ENCODE measurements at regions of chr1 and their contacts with region 1.

Region 1: DNA sequence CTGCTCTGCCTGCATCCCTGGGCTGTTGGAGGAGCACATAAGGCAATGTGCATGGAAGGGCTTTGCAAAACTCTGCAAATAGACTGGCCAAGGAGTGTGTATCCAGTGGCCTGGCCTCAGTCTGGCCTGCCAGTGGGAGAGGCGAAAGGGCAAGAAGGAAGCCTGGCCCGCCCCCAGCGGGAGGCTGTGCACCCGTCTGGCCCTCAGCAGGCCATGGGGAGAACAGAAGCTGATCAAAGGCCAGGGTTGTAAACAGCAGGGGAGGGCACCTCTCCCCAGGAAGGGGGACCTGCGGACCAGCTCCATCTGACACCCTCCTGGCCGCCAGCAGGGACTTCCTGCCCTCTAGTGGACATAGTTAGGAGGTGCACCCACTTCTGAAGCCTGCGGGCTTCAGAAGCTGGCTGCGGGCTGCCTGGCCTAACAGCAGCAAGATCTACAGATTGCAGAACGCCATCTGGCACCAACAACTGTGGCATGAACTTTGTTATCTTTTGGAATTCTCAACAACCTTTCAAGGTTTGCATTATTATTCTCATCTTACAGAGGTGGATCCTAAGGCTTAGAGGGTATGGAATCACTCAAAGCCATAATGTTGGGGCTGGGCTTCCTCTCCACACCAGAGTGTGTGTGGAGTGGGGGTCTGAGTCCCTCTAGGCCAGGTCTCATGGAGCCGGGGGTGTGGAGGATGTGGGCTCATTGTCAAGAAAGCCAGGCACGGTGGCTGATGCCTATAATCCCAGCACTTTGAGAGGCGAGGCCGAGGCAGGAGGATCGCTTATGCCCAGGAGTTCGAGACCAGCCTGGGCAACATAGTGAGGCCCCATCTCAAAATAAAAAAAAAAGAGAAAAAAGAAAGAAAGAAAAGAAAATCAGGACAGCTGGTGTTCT is 18.9 kb upstream of the CDK18 start:
- DNase-seq: peak; percentile 92
- H3K4me3 ChIP-seq: peak overlapping the region in 1 of 2 experiments; percentile 22; a peak in 1 of 4 replicates
- H3K27ac ChIP-seq: no peak overlapping the region
- H3K4me1 ChIP-seq: peaks cover 0 to 3% of the 10 kb centered on the region in 2 experiments; a peak in 2 of 4 replicates
- H3K27me3 ChIP-seq: peaks cover 16% of the 10 kb centered on the region; the same call in 1 of the 2 replicates
- CTCF ChIP-seq: peak; percentile 93
- EP300 ChIP-seq: no peak; a peak in 1 of 4 replicates
- RAD21 ChIP-seq: peak; percentile 91

Region 2: GRCh38 chr1:205344066-205344928 is 141.3 kb before region 1 on chr1:
- CTCF ChIA-PET with region 1: interaction called, 79 read pairs
- POLR2A ChIA-PET with region 1: no interaction called
- DNase-seq: peak; percentile 77
- H3K4me3 ChIP-seq: peak overlapping the region; percentile 41 to 56
- H3K27ac ChIP-seq: no peak overlapping the region
- H3K4me1 ChIP-seq: peaks cover 0 to 7% of the 10 kb centered on the region in 2 experiments; a peak in 1 of 4 replicates
- H3K27me3 ChIP-seq: peaks cover 11% of the 10 kb centered on the region; the same call in 1 of the 2 replicates
- CTCF ChIP-seq: no peak
- EP300 ChIP-seq: no peak
- RAD21 ChIP-seq: no peak

Region 3: GRCh38 chr1:205382561-205382960 is 103.0 kb before region 1 on chr1:
- CTCF ChIA-PET with region 1: interaction called, 21 read pairs
- POLR2A ChIA-PET with region 1: no interaction called
- DNase-seq: no peak
- H3K4me3 ChIP-seq: no peak overlapping the region
- H3K27ac ChIP-seq: no peak overlapping the region
- H3K4me1 ChIP-seq: no peaks in the 10 kb centered on the region
- H3K27me3 ChIP-seq: no peaks in the 10 kb centered on the region
- CTCF ChIP-seq: no peak
- EP300 ChIP-seq: no peak
- RAD21 ChIP-seq: no peak

Region 4: GRCh38 chr1:205416322-205416721 is 69.3 kb before region 1 on chr1:
- CTCF ChIA-PET with region 1: interaction called, 22 read pairs
- POLR2A ChIA-PET with region 1: no interaction called
- DNase-seq: no peak
- H3K4me3 ChIP-seq: no peak overlapping the region
- H3K27ac ChIP-seq: no peak overlapping the region
- H3K4me1 ChIP-seq: no peaks in the 10 kb centered on the region; a peak in 1 of 4 replicates
- H3K27me3 ChIP-seq: peaks cover 17% of the 10 kb centered on the region
- CTCF ChIP-seq: no peak
- EP300 ChIP-seq: no peak
- RAD21 ChIP-seq: no peak

Region 5: DNA sequence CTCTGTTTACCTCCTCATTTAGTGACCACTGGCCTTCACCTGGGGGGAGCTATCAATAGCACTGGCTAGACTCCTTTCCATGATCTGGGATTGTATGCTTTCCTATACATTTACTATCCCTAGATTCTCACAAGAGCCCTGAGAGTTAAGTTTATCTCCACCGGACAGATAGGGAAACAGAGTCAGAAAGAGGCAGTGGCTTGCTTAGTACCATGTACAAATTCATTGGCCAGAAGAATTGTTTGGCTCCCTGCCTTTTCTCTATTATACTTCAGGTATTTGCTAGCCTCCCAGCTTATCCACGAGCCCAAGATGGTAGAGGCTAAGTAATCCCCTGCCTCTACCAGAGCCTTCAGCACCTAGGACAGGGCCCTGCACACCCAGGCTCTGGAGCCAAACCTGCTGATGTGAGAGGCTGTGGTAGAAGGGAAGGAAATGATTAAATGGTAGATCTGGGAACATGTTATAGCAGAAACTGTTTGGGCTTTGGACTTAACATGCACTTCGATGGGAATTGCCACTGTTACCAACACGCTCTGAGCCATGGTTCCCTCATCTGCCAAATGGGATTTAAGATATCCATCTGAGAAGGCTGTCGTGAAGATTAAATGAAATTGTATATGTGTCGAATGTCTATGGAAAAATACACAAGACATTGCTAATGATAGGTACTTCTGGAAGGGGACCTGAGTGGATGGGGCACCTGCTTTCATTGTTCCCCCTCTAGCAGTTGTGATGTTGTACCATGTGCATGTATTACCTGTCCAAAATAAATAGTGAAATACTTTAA is 26.6 kb before region 1 on chr1:
- CTCF ChIA-PET with region 1: interaction called, 14 read pairs
- POLR2A ChIA-PET with region 1: no interaction called
- DNase-seq: no peak
- H3K4me3 ChIP-seq: no peak overlapping the region
- H3K27ac ChIP-seq: no peak overlapping the region
- H3K4me1 ChIP-seq: no peaks in the 10 kb centered on the region; a peak in 1 of 4 replicates
- H3K27me3 ChIP-seq: peaks cover 62% of the 10 kb centered on the region
- CTCF ChIP-seq: no peak
- EP300 ChIP-seq: no peak
- RAD21 ChIP-seq: no peak

Region 6: GRCh38 chr1:205591522-205592351 is 106.2 kb after region 1 on chr1:
- CTCF ChIA-PET with region 1: interaction called, 11 read pairs
- POLR2A ChIA-PET with region 1: no interaction called
- DNase-seq: peak; percentile 87
- H3K4me3 ChIP-seq: peak overlapping the region; percentile 41 to 59
- H3K27ac ChIP-seq: peak overlapping the region in 1 of 2 experiments; percentile 36; a peak in 1 of 4 replicates
- H3K4me1 ChIP-seq: peaks cover 0 to 10% of the 10 kb centered on the region in 2 experiments; a peak in 1 of 4 replicates
- H3K27me3 ChIP-seq: no peaks in the 10 kb centered on the region
- CTCF ChIP-seq: peak; percentile 97
- EP300 ChIP-seq: no peak
- RAD21 ChIP-seq: peak; percentile 95